Right ventricle myocardium superior (tissue), 1 donor: ENCODE measurements at regions of chr2 and their contacts with region 1.

Region 1: GRCh38 chr2:157777427-157777826 is 98.7 kb downstream of the ACVR1 start:
- DNase-seq: no peak
- ATAC-seq: no peak

Region 2: DNA sequence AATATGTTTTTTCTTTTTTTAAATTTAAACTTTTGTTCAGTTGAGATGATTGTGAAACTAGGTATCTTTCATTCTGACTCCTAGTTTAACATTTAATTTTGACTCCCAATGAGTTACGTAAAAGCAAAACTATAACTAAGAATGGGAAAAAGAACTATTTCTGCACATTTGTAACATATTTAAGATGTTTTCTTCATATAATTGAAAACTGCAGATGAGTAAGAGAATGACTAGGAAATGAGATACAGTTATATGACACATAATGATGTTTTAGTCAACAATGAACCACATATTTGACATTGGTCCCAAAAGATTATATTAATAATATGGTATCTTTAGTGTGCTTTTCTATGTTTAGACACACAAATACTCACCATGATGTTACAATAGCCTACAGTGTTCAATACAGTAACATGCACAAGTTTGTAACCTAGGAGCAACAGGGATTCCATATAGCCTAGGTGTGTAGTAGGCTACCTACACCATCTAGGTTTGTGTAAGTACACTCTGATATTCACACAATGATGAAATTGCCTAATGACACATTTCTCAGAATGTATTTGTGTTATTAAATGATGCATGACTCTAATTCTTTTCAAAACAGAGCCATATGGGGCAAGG is 464.5 kb before region 1 on chr2:
- intact Hi-C with region 1: no loop called
- DNase-seq: no peak
- ATAC-seq: no peak

Region 3: GRCh38 chr2:157509744-157510143 is 267.7 kb before region 1 on chr2:
- intact Hi-C with region 1: loop called (anchors 10 kb)
- DNase-seq: no peak
- ATAC-seq: no peak